CD8-positive, alpha-beta memory T cell (primary cell): ENCODE measurements at regions of chr5 and their contacts with region 1.

Region 1: DNA sequence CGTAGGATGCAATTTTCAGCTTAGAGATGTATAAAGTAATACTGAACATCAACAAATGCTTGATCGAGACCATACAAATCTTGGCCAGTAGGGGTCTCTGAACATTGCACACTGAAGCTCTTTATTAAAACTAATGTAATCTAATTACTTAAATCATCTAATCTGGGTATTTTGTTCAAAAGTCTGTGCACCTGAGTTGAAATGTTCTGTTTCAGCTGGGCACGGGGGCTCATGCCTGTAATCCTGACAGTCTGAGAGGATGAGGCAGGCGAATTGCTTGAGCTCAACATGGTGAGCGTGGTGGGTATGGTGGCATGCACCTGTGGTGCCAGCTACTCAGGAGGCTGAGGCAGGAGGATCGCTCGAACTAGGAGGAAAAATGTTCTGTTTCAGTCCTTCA is 41.0 kb downstream of the ESM1 start:
- DNase-seq: peak; percentile 7 to 56 (median 45)
- H3K4me3 ChIP-seq: no peak overlapping the region
- H3K4me3 Mint-ChIP-seq: no peak overlapping the region
- H3K27ac ChIP-seq: no peak overlapping the region
- H3K27ac Mint-ChIP-seq: no peak overlapping the region
- H3K4me1 ChIP-seq: no peaks in the 10 kb centered on the region
- H3K4me1 Mint-ChIP-seq: peaks cover 0 to 5% (median 4%) of the 10 kb centered on the region in 3 donors
- H3K27me3 ChIP-seq: no peaks in the 10 kb centered on the region
- H3K27me3 Mint-ChIP-seq: no peaks in the 10 kb centered on the region

Region 2: GRCh38 chr5:54861212-54861894 is 83.0 kb before region 1 on chr5:
- CTCF ChIA-PET with region 1: no interaction called
- POLR2A ChIA-PET with region 1: no interaction called
- DNase-seq: no peak
- H3K4me3 ChIP-seq: no peak overlapping the region
- H3K4me3 Mint-ChIP-seq: no peak overlapping the region
- H3K27ac ChIP-seq: no peak overlapping the region
- H3K27ac Mint-ChIP-seq: no peak overlapping the region
- H3K4me1 ChIP-seq: no peaks in the 10 kb centered on the region
- H3K4me1 Mint-ChIP-seq: no peaks in the 10 kb centered on the region
- H3K27me3 ChIP-seq: no peaks in the 10 kb centered on the region
- H3K27me3 Mint-ChIP-seq: peaks cover 21 to 35% of the 10 kb centered on the region in 2 donors

Region 3: DNA sequence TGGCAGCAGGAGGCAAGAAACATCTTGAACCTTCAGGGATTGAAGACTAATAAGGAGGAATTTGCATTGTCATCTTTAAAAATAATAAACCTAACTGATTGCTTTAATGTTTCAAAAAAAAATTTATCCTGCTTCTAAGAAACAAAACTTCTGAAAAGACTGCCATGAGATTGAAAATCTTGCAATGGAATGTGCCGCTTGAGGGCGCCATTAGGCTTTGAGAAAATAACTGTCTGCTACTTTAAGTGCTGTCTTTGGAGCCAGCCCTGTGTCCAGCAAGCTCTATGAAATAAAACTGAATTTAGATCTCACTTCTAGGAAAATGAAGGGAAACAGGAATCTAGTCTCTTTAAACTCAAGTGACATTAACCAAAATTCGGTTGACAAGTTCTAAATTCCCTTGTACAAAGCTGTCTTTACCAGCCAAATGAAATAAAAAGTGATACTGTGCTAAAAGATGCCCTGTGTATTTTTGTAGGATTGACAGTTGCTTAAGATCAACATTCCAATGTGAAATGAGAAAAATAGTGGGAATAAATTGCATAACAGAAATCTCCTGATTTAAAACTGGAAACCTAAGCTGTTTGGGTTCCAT is 38.3 kb before region 1 on chr5:
- CTCF ChIA-PET with region 1: interaction called, 42 read pairs
- POLR2A ChIA-PET with region 1: no interaction called
- DNase-seq: peak; percentile 40 to 66 (median 50)
- H3K4me3 ChIP-seq: no peak overlapping the region
- H3K4me3 Mint-ChIP-seq: no peak overlapping the region
- H3K27ac ChIP-seq: no peak overlapping the region
- H3K27ac Mint-ChIP-seq: no peak overlapping the region
- H3K4me1 ChIP-seq: peaks cover 9% of the 10 kb centered on the region
- H3K4me1 Mint-ChIP-seq: peaks cover 9 to 12% (median 11%) of the 10 kb centered on the region in 3 donors
- H3K27me3 ChIP-seq: no peaks in the 10 kb centered on the region
- H3K27me3 Mint-ChIP-seq: peaks cover 0 to 4% of the 10 kb centered on the region in 2 donors

Region 4: DNA sequence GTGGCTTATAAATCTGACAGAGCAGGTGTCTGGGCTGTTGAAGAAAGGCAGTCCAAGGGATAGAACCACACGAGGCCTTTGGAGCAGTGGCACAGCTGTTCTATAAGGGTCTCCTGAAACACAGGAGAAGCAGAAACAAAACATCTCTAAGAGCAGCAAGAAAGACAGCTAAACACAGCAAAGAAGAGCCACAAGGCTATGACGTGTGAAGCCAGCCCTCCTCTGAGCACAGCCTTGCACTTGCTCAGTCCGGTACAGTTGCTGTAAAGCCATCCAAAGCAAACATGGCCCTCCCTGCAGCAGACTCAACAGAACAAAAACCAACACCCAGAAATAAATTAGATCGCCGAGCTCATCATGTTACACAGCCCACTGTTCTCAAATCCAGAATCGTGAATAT is 77.0 kb after region 1 on chr5:
- CTCF ChIA-PET with region 1: interaction called, 16 read pairs
- POLR2A ChIA-PET with region 1: no interaction called
- DNase-seq: peak in 2 of 5 donors; percentile 14 to 52
- H3K4me3 ChIP-seq: peak overlapping the region; percentile 7
- H3K4me3 Mint-ChIP-seq: peak overlapping the region; percentile 68 to 90 (median 83)
- H3K27ac ChIP-seq: no peak overlapping the region
- H3K27ac Mint-ChIP-seq: peak overlapping the region; percentile 66 to 97 (median 84)
- H3K4me1 ChIP-seq: peaks cover 32% of the 10 kb centered on the region
- H3K4me1 Mint-ChIP-seq: peaks cover 50 to 69% (median 58%) of the 10 kb centered on the region in 3 donors
- H3K27me3 ChIP-seq: no peaks in the 10 kb centered on the region
- H3K27me3 Mint-ChIP-seq: peaks cover 0 to 3% of the 10 kb centered on the region in 2 donors

Region 5: DNA sequence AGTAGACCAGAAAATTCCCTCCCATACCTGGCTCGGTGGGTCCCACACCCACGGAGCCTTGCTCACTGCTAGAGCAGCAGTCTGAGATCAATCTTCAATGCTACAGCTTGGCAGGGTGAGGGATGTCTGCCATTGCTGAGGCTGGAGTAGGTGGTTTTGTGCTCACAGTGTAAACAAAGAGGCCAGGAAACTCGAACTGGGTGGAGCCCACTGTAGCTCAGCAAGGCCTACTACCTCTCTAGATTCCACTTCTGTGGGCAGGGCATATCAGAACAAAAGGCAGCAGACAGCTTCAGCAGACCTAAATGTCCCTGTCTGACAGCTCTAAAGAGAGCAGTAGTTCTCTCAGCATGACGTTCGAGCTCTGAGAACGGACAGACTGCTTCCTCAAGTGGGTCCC is 152.5 kb after region 1 on chr5:
- CTCF ChIA-PET with region 1: interaction called, 31 read pairs
- POLR2A ChIA-PET with region 1: no interaction called
- DNase-seq: peak; percentile 13 to 75 (median 56)
- H3K4me3 ChIP-seq: peak overlapping the region; percentile 9
- H3K4me3 Mint-ChIP-seq: peak overlapping the region; percentile 61 to 87 (median 70)
- H3K27ac ChIP-seq: peak overlapping the region; percentile 8
- H3K27ac Mint-ChIP-seq: peak overlapping the region; percentile 84 to 97 (median 89)
- H3K4me1 ChIP-seq: peaks cover 57% of the 10 kb centered on the region
- H3K4me1 Mint-ChIP-seq: peaks cover 83 to 92% (median 89%) of the 10 kb centered on the region in 3 donors
- H3K27me3 ChIP-seq: no peaks in the 10 kb centered on the region
- H3K27me3 Mint-ChIP-seq: no peaks in the 10 kb centered on the region

Region 6: DNA sequence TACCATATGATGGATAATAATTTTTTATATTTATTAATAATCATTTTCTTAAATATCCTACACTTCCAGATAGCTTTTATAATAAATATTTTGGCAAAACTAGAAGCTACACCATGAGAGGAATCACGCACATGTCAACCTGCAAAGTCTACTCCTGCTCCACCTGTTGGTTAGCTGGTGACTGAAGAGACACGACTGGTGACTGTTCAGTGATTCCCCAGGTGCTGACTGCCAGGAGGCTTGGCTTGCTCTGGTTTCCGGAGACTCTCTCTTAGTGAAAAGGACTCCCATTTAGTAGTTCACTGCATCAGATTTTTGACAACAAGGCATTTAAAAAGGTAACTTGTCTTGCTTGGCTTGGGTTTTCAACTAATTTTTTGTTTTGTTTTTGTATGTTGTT is 179.0 kb after region 1 on chr5:
- CTCF ChIA-PET with region 1: interaction called, 10 read pairs
- POLR2A ChIA-PET with region 1: no interaction called
- DNase-seq: no peak
- H3K4me3 ChIP-seq: no peak overlapping the region
- H3K4me3 Mint-ChIP-seq: no peak overlapping the region
- H3K27ac ChIP-seq: no peak overlapping the region
- H3K27ac Mint-ChIP-seq: no peak overlapping the region
- H3K4me1 ChIP-seq: no peaks in the 10 kb centered on the region
- H3K4me1 Mint-ChIP-seq: peaks cover 2 to 6% (median 2%) of the 10 kb centered on the region in 3 donors
- H3K27me3 ChIP-seq: no peaks in the 10 kb centered on the region
- H3K27me3 Mint-ChIP-seq: no peaks in the 10 kb centered on the region

Region 7: GRCh38 chr5:55159763-55160492 is 215.6 kb after region 1 on chr5 and contains the start of gene GPX8:
- CTCF ChIA-PET with region 1: interaction called, 23 read pairs
- POLR2A ChIA-PET with region 1: no interaction called
- DNase-seq: peak in 2 of 5 donors; percentile 46 to 51
- H3K4me3 ChIP-seq: no peak within 1 kb of the TSS
- H3K4me3 Mint-ChIP-seq: no peak within 1 kb of the TSS
- H3K27ac ChIP-seq: no peak within 1 kb of the TSS
- H3K27ac Mint-ChIP-seq: no peak within 1 kb of the TSS
- H3K4me1 ChIP-seq: no peaks in the 10 kb centered on the region
- H3K4me1 Mint-ChIP-seq: no peaks in the 10 kb centered on the region
- H3K27me3 ChIP-seq: peaks cover 3% of the 10 kb centered on the region
- H3K27me3 Mint-ChIP-seq: peaks cover 6 to 45% of the 10 kb centered on the region in 2 donors
- total RNA-seq, gene GPX8: not detected